ENCODE measurements at regions of chrX and their contacts with region 1.

Region 1: GRCh38 chrX:144840616-144841015 is 406.7 kb upstream of the SPANXN1 start:
- DNase-seq: no peak
- H3K4me3 ChIP-seq: no peak overlapping the region
- H3K27ac ChIP-seq: no peak overlapping the region
- H3K4me1 ChIP-seq: no peaks in the 10 kb centered on the region
- H3K27me3 ChIP-seq: no peaks in the 10 kb centered on the region
- CTCF ChIP-seq: no peak
- EP300 ChIP-seq: no peak
- POLR2A ChIP-seq: no peak

Region 2: DNA sequence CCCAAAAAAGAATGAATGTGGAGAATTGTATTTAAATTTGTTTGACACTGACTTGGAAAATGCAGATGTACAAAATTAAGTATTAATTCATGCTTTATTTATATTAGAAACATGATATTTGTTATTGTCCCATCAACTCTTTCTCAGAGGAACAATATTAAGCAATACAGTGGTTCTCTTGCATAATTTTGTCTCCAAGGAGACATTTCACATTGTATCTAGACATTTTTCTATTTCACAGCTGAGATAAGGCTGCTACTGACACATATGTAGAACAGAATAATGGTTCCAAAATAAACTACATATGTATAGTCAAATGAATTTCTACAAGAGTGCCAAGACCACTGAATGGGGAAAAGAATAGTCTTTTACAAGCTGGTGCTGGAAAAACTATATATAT is 21.2 kb before region 1 on chrX:
- intact Hi-C with region 1: loop called in 1 of 4 experiments (anchors 2 kb)
- DNase-seq: no peak
- H3K4me3 ChIP-seq: no peak overlapping the region
- H3K27ac ChIP-seq: no peak overlapping the region
- H3K4me1 ChIP-seq: no peaks in the 10 kb centered on the region
- H3K27me3 ChIP-seq: no peaks in the 10 kb centered on the region
- CTCF ChIP-seq: no peak
- EP300 ChIP-seq: no peak
- POLR2A ChIP-seq: no peak

Measured in ovary (tissue), 10 donors.